Dendritic cell treated with granulocyte-macrophage colony-stimulating factor and Interleukin-4, amounts not matched to agents 40 ng/mL and 50 ng/mL, for 4 days (primary cell): ENCODE measurements at regions of chr22 and their contacts with region 1.

Region 1: DNA sequence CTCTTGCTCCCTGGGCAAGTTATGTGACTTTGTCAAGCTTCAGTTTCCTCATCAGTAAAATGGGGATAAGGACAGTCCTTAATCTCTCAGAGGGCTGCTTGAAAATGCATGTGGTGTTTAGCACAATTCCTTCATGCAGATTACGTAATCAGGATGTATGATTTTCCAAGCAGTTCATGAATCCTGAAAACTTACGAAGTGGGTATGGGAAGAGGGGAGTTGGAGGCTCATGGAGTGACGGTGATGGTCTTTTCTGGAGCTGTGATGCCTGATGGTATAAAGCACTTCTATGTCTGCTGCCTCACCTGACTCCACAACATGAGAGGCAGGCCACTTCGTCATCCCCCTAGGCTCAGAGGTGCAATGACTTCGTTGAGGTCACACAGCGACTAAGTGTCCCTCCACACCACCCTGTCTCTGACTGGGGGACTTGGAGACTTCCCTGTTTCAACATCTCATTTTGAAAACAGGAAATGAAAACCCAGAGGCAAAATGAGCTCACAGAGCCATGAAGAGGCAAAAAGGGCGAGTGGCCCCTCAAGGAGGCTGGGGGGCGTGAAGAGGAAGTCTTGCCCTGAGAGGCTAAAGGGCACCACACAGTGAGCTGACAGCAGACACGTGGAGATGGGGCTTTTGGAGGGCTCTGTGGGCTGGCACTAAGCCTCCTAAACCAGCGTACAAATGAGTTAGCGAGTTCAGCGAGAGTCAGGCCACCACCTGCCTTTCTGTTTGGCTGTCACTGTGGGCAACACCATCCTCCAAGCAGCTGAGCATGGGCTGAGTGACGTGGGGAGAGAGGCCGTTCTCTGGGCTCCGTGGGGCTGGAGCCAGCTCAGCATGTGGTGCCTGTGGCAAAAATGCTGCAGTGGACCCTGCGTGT is 10.1 kb downstream of the MCM5 start:
- H3K4me3 Mint-ChIP-seq: peak overlapping the region; percentile 58
- H3K27ac Mint-ChIP-seq: peak overlapping the region; percentile 82
- H3K4me1 Mint-ChIP-seq: peaks cover 61% of the 10 kb centered on the region
- H3K27me3 Mint-ChIP-seq: no peaks in the 10 kb centered on the region

Region 2: GRCh38 chr22:35376728-35377472 is 33.1 kb before region 1 on chr22:
- intact Hi-C with region 1: loop called (anchors 1 kb)
- H3K4me3 Mint-ChIP-seq: peak overlapping the region; percentile 74
- H3K27ac Mint-ChIP-seq: peak overlapping the region; percentile 92
- H3K4me1 Mint-ChIP-seq: peaks cover 83% of the 10 kb centered on the region
- H3K27me3 Mint-ChIP-seq: no peaks in the 10 kb centered on the region

Region 3: DNA sequence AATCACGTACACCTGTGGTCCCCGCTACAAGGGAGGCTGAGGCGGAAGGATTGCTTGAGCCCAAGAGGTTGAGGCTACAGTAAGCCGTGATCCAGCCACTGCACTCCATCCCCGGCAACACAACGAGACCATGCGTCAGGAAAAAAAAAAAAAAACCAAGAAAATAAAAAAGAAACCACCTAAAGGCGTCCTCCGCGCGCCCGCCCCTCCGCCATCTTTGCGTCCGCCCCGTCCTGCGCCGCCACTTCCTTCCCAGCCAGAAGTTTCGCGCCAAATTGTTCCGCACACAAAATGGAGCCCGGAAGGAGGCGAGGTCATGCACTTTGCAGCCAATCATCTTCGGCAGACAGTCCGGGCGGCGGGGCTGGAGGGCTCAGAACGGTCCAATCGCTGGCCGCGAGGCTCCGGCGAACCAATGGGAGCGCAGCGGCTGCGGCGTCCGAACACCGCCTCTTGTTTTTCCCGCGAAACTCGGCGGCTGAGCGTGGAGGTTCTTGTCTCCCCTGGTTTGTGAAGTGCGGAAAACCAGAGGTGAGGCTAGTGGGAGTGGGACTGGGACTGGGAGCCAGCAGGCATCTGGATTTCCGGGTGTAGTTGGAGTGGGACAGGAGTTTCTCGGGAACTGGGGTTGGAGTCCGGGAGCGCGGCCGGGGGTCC is 10.2 kb before region 1 on chr22 and contains the start of gene MCM5:
- intact Hi-C with region 1: loop called (anchors 1 kb)
- H3K4me3 Mint-ChIP-seq: peak within 1 kb of the TSS; percentile 97
- H3K27ac Mint-ChIP-seq: peak within 1 kb of the TSS; percentile 91
- H3K4me1 Mint-ChIP-seq: peaks cover 59% of the 10 kb centered on the region
- H3K27me3 Mint-ChIP-seq: no peaks in the 10 kb centered on the region